ENCODE measurements at regions of chr16 and their contacts with region 1.

Region 1: GRCh38 chr16:75110637-75111513 is 5.7 kb downstream of the LDHD start:
- DNase-seq: peak; percentile 70 to 91 (median 78)
- ATAC-seq: peak; percentile 74
- H3K4me3 ChIP-seq: peak overlapping the region; percentile 20
- H3K4me3 Mint-ChIP-seq: peak overlapping the region; percentile 44
- H3K27ac ChIP-seq: peak overlapping the region in 1 of 2 donors; percentile 62
- H3K27ac Mint-ChIP-seq: peak overlapping the region; percentile 82
- H3K4me1 ChIP-seq: peaks cover 59% of the 10 kb centered on the region
- H3K4me1 Mint-ChIP-seq: peaks cover 55% of the 10 kb centered on the region
- H3K27me3 ChIP-seq: peaks cover 4 to 9% of the 10 kb centered on the region in 2 experiments
- H3K27me3 Mint-ChIP-seq: peaks cover 11% of the 10 kb centered on the region
- CTCF ChIP-seq: peak; percentile 91

Region 2: DNA sequence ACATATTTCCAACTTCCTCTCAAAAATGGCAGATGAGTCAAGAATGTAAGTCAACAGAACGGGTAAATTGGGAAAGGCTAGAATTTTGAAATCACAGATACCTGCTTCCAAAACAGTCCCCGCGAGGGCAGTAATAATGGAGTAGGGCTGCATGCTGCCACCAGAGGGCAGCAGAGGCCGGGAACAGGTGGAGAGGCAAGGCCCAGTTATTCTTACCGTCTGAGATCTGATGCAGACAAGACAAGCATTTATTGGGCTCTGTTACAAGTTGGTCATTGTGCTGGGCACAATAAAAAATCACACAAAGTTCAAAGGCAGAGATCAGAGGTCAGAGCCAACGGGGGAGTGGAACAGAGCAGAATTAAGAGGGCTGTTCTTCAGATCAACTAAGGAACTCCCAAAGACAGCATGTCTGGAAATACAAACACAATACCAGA is 401.4 kb before region 1 on chr16:
- CTCF ChIA-PET with region 1: no interaction called
- POLR2A ChIA-PET with region 1: no interaction called
- intact Hi-C with region 1: loop called (anchors 1 to 2 kb)
- DNase-seq: peak; percentile 65 to 91 (median 80)
- ATAC-seq: peak; percentile 100
- H3K4me3 ChIP-seq: no peak overlapping the region
- H3K4me3 Mint-ChIP-seq: no peak overlapping the region
- H3K27ac ChIP-seq: no peak overlapping the region
- H3K27ac Mint-ChIP-seq: no peak overlapping the region
- H3K4me1 ChIP-seq: peaks cover 2% of the 10 kb centered on the region
- H3K4me1 Mint-ChIP-seq: no peaks in the 10 kb centered on the region
- H3K27me3 ChIP-seq: no peaks in the 10 kb centered on the region
- H3K27me3 Mint-ChIP-seq: no peaks in the 10 kb centered on the region
- CTCF ChIP-seq: peak; percentile 98

Region 3: DNA sequence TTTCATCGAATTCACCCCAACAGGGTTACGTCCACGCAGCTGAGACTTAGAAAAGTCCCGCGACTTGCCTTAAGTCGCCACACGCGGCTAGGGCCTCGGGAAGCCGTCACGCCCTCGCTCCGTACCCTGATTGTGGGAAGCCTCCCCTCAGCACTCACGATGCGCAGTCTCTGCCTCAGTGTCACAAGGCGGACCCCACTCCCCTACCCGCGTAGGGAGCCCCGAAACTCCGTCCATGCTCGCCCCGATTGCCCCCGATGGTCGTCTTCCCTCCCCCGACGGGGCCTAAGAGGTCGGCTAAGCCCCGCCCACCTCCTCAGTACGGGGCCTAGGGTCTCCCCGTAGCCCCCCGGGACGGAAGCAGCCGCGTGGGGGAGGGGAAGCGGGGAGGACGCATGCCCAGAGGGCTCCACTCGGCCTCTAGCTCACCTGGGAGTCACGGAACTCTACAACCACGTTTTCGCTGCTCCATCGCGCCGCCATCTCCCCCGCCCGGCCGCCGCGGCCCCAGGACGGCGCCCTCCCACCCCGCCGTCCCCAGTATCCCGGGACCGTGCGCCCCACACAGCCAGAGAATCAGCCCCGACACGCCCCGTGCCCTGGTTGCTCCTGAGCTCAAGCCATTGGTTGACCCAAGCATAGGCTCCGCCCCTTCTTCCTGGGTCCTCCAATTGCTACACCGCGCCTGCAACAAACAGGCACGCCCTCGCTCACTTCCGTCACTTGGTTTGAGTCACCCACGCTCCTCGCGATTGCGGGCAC is 126.2 kb before region 1 on chr16 and contains the start of gene WDR59:
- CTCF ChIA-PET with region 1: interaction called, 16 read pairs
- POLR2A ChIA-PET with region 1: interaction called, 17 read pairs
- intact Hi-C with region 1: no loop called
- DNase-seq: peak; percentile 94 to 100 (median 98)
- ATAC-seq: peak; percentile 98
- H3K4me3 ChIP-seq: peak within 1 kb of the TSS; percentile 100
- H3K4me3 Mint-ChIP-seq: peak within 1 kb of the TSS; percentile 96
- H3K27ac ChIP-seq: peak within 1 kb of the TSS; percentile 44 to 61
- H3K27ac Mint-ChIP-seq: peak within 1 kb of the TSS; percentile 84
- H3K4me1 ChIP-seq: peaks cover 23% of the 10 kb centered on the region
- H3K4me1 Mint-ChIP-seq: peaks cover 23% of the 10 kb centered on the region
- H3K27me3 ChIP-seq: no peaks in the 10 kb centered on the region
- H3K27me3 Mint-ChIP-seq: no peaks in the 10 kb centered on the region
- CTCF ChIP-seq: no peak
- total RNA-seq, gene WDR59: 60.2 to 67.2 TPM

Region 4: GRCh38 chr16:75003910-75004309 is 107.0 kb before region 1 on chr16:
- CTCF ChIA-PET with region 1: interaction called, 75 read pairs
- POLR2A ChIA-PET with region 1: interaction called, 54 read pairs
- intact Hi-C with region 1: no loop called
- DNase-seq: no peak
- ATAC-seq: no peak
- H3K4me3 ChIP-seq: no peak overlapping the region
- H3K4me3 Mint-ChIP-seq: no peak overlapping the region
- H3K27ac ChIP-seq: no peak overlapping the region
- H3K27ac Mint-ChIP-seq: no peak overlapping the region
- H3K4me1 ChIP-seq: peaks cover 18% of the 10 kb centered on the region
- H3K4me1 Mint-ChIP-seq: peaks cover 15% of the 10 kb centered on the region
- H3K27me3 ChIP-seq: no peaks in the 10 kb centered on the region
- H3K27me3 Mint-ChIP-seq: no peaks in the 10 kb centered on the region
- CTCF ChIP-seq: no peak

Region 5: GRCh38 chr16:75074920-75075687 is 35.8 kb before region 1 on chr16:
- CTCF ChIA-PET with region 1: interaction called, 9 read pairs
- POLR2A ChIA-PET with region 1: interaction called, 7 read pairs
- intact Hi-C with region 1: loop called (anchors 1 to 5 kb)
- DNase-seq: peak; percentile 64 to 95 (median 80)
- ATAC-seq: peak; percentile 95
- H3K4me3 ChIP-seq: peak overlapping the region; percentile 32
- H3K4me3 Mint-ChIP-seq: peak overlapping the region; percentile 35
- H3K27ac ChIP-seq: peak overlapping the region; percentile 1 to 41
- H3K27ac Mint-ChIP-seq: peak overlapping the region; percentile 88
- H3K4me1 ChIP-seq: peaks cover 54% of the 10 kb centered on the region
- H3K4me1 Mint-ChIP-seq: peaks cover 66% of the 10 kb centered on the region
- H3K27me3 ChIP-seq: no peaks in the 10 kb centered on the region
- H3K27me3 Mint-ChIP-seq: no peaks in the 10 kb centered on the region
- CTCF ChIP-seq: no peak